ENCODE measurements at regions of chr1 and their contacts with region 1.

Region 1: DNA sequence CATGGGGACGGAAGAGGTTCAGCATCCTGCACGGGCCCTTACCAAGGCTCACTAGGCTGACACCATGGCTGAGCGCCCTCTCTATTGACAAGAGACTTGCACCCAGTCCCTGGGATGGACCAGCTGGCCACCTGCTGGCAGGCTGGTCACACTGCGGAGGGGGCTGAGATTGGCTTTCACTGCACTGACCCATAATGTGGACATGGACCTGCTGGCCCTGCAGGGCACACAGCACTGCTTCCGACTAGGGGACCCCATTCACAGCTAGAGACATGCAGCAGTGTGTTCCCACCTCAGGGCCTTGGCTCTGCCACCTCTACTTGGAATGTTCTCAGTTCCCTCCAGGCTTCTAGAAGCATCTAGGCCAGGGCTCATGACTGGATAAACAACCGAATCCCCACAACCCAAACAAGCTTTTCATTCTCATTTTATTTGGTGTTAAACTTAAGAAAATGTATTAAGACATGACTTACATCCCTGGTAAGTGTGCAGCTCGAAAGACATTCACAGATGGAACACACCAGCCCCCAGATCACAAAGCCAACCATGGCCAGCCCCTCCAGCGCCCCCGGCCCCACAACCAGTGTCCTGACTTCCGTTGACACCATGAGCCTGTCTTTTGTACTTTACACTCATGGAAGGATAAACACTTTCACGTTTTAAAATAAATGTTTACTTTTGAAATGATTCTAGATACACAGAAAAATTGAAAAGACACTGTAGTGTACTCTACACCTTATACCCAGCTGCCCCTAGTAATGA is 9.3 kb upstream of the SRARP start:
- DNase-seq: peak in 4 of 5 donors; percentile 55 to 83 (median 67)
- ATAC-seq: peak; percentile 45 to 87 (median 83)
- H3K4me3 ChIP-seq: no peak overlapping the region
- H3K27ac ChIP-seq: no peak overlapping the region
- H3K4me1 ChIP-seq: no peaks in the 10 kb centered on the region
- H3K27me3 ChIP-seq: no peaks in the 10 kb centered on the region
- CTCF ChIP-seq: peak; percentile 69 to 92 (median 74)
- POLR2A ChIP-seq: no peak

Region 2: DNA sequence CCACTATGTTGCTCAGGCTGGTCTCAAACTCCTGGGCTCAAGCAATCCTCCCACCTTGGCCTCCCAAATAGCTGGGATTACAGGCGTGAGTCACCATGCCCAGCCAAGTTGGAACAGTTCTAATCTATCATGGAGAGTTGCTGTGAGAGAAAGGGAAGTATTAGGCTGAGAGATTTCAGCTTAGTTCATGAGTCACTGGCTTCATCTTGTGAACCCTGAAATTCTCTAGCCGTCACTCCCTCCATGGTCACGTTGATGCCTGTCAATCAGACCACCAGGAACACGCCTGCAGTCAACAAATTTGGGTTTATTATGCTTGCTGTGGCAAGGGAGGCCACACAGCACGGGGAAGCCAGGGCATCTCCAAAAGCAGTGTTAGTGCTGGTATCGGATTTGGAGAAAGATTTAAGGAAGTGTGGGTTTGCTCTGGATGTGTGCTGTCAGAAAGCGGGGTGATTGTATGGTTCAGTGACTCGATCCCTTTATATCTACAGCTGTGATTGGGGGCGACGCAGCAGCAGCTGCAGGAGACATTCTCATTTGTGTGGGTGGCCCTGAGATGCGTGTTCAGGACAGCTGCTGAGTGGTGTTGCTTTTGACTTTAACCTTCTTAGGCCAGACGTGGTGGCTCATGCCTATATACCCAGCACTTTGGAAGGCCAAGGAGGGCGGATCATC is 206.0 kb before region 1 on chr1:
- intact Hi-C with region 1: loop called in 6 of 10 experiments (anchors 1 to 10 kb)
- DNase-seq: no peak
- ATAC-seq: no peak
- H3K4me3 ChIP-seq: no peak overlapping the region
- H3K27ac ChIP-seq: no peak overlapping the region
- H3K4me1 ChIP-seq: peaks cover 0 to 17% (median 6%) of the 10 kb centered on the region in 12 donors
- H3K27me3 ChIP-seq: no peaks in the 10 kb centered on the region
- CTCF ChIP-seq: no peak
- POLR2A ChIP-seq: no peak

Region 3: DNA sequence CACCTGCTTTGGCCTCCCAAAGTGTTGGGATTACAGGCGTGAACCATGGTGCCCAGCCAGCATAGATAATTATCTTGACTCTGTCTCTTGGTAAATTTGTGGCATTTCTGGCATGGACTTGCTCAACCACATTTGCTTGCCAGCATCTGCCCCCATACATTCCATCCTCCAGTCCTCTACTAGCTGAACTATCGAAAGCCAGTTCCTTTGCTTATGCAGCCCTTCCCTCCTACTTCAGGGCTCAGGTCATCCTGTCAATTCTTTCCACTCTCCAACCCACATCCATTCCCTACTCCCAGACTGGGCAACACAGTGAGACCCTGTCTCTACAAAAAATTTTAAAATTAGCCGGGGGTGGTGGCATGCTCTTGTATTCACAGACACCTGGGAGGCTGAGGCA is 174.3 kb before region 1 on chr1:
- intact Hi-C with region 1: loop called in 8 of 10 experiments (anchors 2 to 5 kb)
- DNase-seq: no peak
- ATAC-seq: no peak
- H3K4me3 ChIP-seq: no peak overlapping the region
- H3K27ac ChIP-seq: no peak overlapping the region
- H3K4me1 ChIP-seq: peaks cover 0 to 10% (median 3%) of the 10 kb centered on the region in 12 donors
- H3K27me3 ChIP-seq: no peaks in the 10 kb centered on the region
- CTCF ChIP-seq: no peak
- POLR2A ChIP-seq: no peak

Region 4: GRCh38 chr1:16048573-16049189 is 53.9 kb after region 1 on chr1:
- intact Hi-C with region 1: no loop called
- DNase-seq: peak in 4 of 5 donors; percentile 44 to 72 (median 63)
- ATAC-seq: peak; percentile 39 to 75 (median 50)
- H3K4me3 ChIP-seq: peak overlapping the region; percentile 4 to 59 (median 44)
- H3K27ac ChIP-seq: peak overlapping the region in 3 of 12 donors; percentile 3 to 34 (median 18)
- H3K4me1 ChIP-seq: peaks cover 0 to 11% (median 5%) of the 10 kb centered on the region in 12 donors
- H3K27me3 ChIP-seq: peaks cover 0 to 6% (median 0%) of the 10 kb centered on the region in 9 donors
- CTCF ChIP-seq: peak in 4 of 12 donors; percentile 6 to 18 (median 12)
- POLR2A ChIP-seq: no peak

Measured in heart left ventricle (tissue), 16 donors.